PC-3 (cell line): ENCODE measurements at regions of chr3 and their contacts with region 1.

Region 1: DNA sequence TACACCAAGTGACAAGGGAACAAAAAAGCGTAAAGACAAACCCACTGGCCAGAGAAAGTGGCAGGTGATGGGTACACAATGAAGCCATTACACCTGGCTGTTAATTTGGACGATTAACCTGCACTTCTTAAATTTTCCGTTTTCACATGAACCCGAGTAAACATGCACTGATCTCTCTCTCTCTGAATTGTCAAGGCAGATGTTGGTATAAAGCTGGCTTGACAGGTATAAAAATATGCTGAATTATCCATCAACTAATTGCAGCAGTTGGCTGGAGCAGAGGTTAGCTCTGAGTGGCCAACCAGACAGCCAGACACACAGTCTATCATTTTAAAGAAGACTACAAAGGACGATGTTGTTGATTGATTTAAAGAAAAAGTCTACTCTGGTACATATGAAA is 561.7 kb upstream of the ALCAM start:
- DNase-seq: no peak
- ATAC-seq: no peak
- H3K4me3 ChIP-seq: no peak overlapping the region
- H3K27ac ChIP-seq: no peak overlapping the region
- H3K4me1 ChIP-seq: no peaks in the 10 kb centered on the region
- H3K27me3 ChIP-seq: no peaks in the 10 kb centered on the region
- CTCF ChIP-seq: no peak

Region 2: DNA sequence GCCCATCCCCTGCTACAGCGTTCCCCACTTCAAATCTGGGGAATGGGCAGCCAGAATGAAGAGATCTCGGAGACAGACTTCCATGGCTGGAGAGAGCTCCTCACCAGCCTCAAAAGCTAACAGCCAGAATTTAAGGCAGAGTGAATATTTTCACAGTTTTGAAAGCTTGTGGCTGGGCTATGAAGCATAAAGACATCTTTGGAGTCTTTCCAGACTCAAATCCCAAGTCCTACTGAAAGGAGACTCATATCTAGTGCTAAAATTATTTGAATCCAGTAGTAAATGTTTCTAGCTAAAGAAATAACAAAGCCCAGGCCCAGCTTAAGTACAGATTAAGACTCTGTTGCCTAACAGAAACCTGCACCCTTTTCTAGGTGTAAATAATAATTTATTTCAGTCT is 66.8 kb before region 1 on chr3:
- CTCF ChIA-PET with region 1: no interaction called
- POLR2A ChIA-PET with region 1: no interaction called
- intact Hi-C with region 1: loop called (anchors 2 kb)
- DNase-seq: no peak
- ATAC-seq: no peak
- H3K4me3 ChIP-seq: no peak overlapping the region
- H3K27ac ChIP-seq: no peak overlapping the region
- H3K4me1 ChIP-seq: no peaks in the 10 kb centered on the region
- H3K27me3 ChIP-seq: no peaks in the 10 kb centered on the region
- CTCF ChIP-seq: no peak